ENCODE measurements at regions of chr6 and their contacts with region 1.

Region 1: DNA sequence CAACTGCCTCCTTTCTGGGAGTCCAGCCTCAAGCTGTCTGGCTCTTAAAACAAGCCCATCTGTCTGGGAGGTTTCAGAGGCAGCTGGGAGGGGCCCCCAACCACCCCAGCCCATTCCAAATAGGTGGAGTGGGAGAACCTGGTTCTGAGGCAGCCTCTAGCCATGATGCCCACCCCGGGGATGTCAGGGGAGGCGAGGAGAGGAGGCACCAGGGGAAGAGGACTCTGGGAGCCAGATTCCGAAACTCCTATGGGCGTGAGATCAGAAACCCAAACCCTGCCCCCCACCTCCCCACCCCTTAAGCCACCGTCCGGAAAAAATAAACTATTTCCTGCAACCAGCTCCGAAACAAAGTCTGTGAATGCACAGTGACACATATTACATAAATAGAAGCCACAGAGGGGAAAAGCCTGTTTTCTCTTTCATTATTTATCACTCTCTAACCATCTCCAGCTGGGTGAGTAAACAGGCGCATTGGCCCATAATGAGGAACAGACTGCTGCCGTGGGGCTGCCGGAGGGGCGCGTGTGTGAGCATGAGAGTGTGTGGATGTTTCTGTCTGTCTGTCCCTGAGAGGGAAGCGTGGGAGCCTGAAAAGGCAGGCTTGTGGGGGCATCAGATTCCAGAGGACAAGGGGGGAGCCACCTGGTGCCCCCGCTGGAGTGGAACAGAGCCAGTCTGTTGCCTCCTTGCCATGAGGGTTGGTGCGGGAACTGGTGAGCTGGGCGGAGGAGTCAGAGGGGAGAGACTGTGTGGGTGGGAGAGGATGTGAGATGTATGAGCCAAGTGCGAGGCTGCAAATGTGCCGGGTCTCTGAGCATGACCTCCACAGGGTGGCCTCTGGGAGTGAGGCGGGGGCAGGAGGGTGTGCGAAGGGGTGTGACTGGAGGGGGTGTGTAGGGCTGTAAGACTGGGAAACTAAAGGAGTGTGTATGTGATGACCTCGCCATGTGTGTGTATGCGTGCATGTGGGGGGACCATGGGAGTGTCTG is 14.3 kb upstream of the FOXP4 start:
- DNase-seq: peak; percentile 87
- H3K4me3 Mint-ChIP-seq: peak overlapping the region; percentile 86
- H3K27ac Mint-ChIP-seq: peak overlapping the region; percentile 96
- H3K4me1 Mint-ChIP-seq: peaks cover 23% of the 10 kb centered on the region
- H3K27me3 Mint-ChIP-seq: peaks cover 65% of the 10 kb centered on the region

Region 2: GRCh38 chr6:41519745-41520699 is 11.9 kb before region 1 on chr6:
- intact Hi-C with region 1: no loop called
- DNase-seq: no peak
- H3K4me3 Mint-ChIP-seq: no peak overlapping the region
- H3K27ac Mint-ChIP-seq: no peak overlapping the region
- H3K4me1 Mint-ChIP-seq: no peaks in the 10 kb centered on the region
- H3K27me3 Mint-ChIP-seq: peaks cover 44% of the 10 kb centered on the region

Region 3: GRCh38 chr6:41545703-41546474 is 14.0 kb after region 1 on chr6 and contains the start of gene FOXP4:
- intact Hi-C with region 1: loop called (anchors 1 kb)
- DNase-seq: peak; percentile 94
- H3K4me3 Mint-ChIP-seq: peak within 1 kb of the TSS; percentile 91
- H3K27ac Mint-ChIP-seq: peak within 1 kb of the TSS; percentile 79
- H3K4me1 Mint-ChIP-seq: peaks cover 20% of the 10 kb centered on the region
- H3K27me3 Mint-ChIP-seq: peaks cover 60% of the 10 kb centered on the region
- total RNA-seq, gene FOXP4: 16.9 and 17.6 TPM in 2 replicates